MCF 10A (cell line): ENCODE measurements at regions of chr17 and their contacts with region 1.

Region 1: GRCh38 chr17:63919311-63919723 is 678 bp upstream of the GH1 start:
- DNase-seq: peak; percentile 64
- H3K4me3 Mint-ChIP-seq: no peak overlapping the region
- H3K27ac Mint-ChIP-seq: no peak overlapping the region
- H3K4me1 Mint-ChIP-seq: peaks cover 5% of the 10 kb centered on the region
- H3K27me3 Mint-ChIP-seq: peaks cover 13% of the 10 kb centered on the region
- CTCF ChIP-seq: peak; percentile 90

Region 2: GRCh38 chr17:63827002-63827771 is 92.1 kb before region 1 on chr17 and contains the starts of genes FTSJ3 and PSMC5:
- CTCF ChIA-PET with region 1: no interaction called
- POLR2A ChIA-PET with region 1: no interaction called
- intact Hi-C with region 1: no loop called
- DNase-seq: peak; percentile 96
- H3K4me3 Mint-ChIP-seq: peak within 1 kb of the TSS; percentile 100
- H3K27ac Mint-ChIP-seq: peak within 1 kb of the TSS; percentile 100
- H3K4me1 Mint-ChIP-seq: peaks cover 27% of the 10 kb centered on the region
- H3K27me3 Mint-ChIP-seq: no peaks in the 10 kb centered on the region
- CTCF ChIP-seq: peak; percentile 26
- total RNA-seq, gene FTSJ3: 36.7 and 49.5 TPM in 2 replicates
- total RNA-seq, gene PSMC5: 148 and 151 TPM in 2 replicates

Region 3: GRCh38 chr17:63931099-63931561 is 11.8 kb after region 1 on chr17:
- CTCF ChIA-PET with region 1: interaction called, 21 read pairs
- POLR2A ChIA-PET with region 1: no interaction called
- intact Hi-C with region 1: no loop called
- DNase-seq: no peak
- H3K4me3 Mint-ChIP-seq: no peak overlapping the region
- H3K27ac Mint-ChIP-seq: no peak overlapping the region
- H3K4me1 Mint-ChIP-seq: no peaks in the 10 kb centered on the region
- H3K27me3 Mint-ChIP-seq: peaks cover 7% of the 10 kb centered on the region
- CTCF ChIP-seq: no peak

Region 4: GRCh38 chr17:63946440-63947367 is 27.4 kb after region 1 on chr17:
- CTCF ChIA-PET with region 1: interaction called, 20 read pairs
- POLR2A ChIA-PET with region 1: no interaction called
- intact Hi-C with region 1: loop called (anchors 5 kb)
- DNase-seq: peak; percentile 35
- H3K4me3 Mint-ChIP-seq: no peak overlapping the region
- H3K27ac Mint-ChIP-seq: no peak overlapping the region
- H3K4me1 Mint-ChIP-seq: no peaks in the 10 kb centered on the region
- H3K27me3 Mint-ChIP-seq: no peaks in the 10 kb centered on the region
- CTCF ChIP-seq: peak; percentile 82

Region 5: DNA sequence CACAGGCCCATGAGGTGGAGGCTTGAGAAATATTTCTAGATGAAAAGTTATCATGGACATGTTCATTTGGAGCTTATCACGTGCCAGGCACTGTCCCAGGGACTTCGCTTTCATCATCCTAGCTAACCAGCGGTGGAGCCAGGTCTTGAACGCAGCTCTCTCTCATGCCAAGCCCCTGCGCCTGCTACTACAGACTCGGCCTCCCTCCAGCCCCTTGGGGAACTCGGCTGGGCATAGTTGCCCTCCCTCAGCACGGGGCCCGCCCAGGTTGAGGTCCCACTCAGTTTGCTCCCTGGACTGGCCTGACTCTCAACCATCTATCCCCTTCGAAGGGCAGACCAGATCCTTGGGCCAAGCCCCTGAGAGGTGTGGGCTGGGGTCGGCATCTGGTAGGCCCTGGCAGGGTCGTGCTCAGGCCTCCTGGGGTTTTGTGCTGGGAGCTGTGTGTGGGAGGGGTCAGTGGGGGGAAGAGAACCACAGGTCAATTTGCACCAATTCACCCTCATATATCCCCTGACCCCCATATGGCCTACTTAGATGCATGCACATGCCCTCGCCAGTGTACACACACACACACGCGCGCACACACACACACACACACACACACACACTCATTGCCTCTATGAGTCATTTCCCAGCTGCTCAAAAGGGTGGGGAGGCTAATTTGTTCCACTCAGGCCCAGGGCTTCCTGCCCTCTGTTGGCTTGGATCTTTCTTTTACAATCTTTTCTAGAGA is 65.5 kb after region 1 on chr17:
- CTCF ChIA-PET with region 1: interaction called, 6 read pairs
- POLR2A ChIA-PET with region 1: no interaction called
- intact Hi-C with region 1: loop called (anchors 2 kb)
- DNase-seq: peak; percentile 73
- H3K4me3 Mint-ChIP-seq: no peak overlapping the region
- H3K27ac Mint-ChIP-seq: peak overlapping the region; percentile 33
- H3K4me1 Mint-ChIP-seq: peaks cover 9% of the 10 kb centered on the region
- H3K27me3 Mint-ChIP-seq: peaks cover 7% of the 10 kb centered on the region
- CTCF ChIP-seq: no peak

Region 6: DNA sequence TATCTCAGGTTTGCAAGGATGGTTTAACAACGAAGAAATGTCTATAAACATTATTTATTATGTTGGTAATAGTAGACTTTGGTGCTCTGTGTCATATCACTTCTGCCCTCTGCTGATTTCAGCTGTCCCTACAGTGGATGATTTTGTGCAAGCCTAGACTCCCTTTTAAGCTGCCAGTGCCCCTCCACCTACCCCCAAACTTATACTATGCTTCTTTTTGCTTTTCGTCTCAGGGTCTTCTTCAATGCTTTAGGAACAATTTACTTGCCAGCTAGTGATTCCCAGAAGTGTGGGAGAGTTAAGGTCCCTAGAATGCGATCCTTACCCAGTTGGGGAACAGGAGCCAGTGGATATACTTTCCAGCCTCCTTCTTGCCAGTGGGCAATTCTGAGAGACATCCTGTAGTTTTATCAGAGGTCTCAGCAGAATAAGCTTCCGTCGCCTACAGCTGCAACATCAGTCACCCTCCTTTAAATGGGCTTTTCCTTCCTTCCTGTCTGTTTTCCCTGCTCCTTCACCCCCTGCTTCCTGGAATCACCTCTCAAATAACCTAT is 97.0 kb after region 1 on chr17:
- CTCF ChIA-PET with region 1: interaction called, 15 read pairs
- POLR2A ChIA-PET with region 1: no interaction called
- intact Hi-C with region 1: loop called (anchors 2 kb)
- DNase-seq: no peak
- H3K4me3 Mint-ChIP-seq: no peak overlapping the region
- H3K27ac Mint-ChIP-seq: no peak overlapping the region
- H3K4me1 Mint-ChIP-seq: no peaks in the 10 kb centered on the region
- H3K27me3 Mint-ChIP-seq: peaks cover 12% of the 10 kb centered on the region
- CTCF ChIP-seq: no peak

Region 7: GRCh38 chr17:64281962-64282727 is 362.8 kb after region 1 on chr17:
- CTCF ChIA-PET with region 1: interaction called, 4 read pairs
- POLR2A ChIA-PET with region 1: no interaction called
- intact Hi-C with region 1: loop called (anchors 10 kb)
- DNase-seq: peak; percentile 72
- H3K4me3 Mint-ChIP-seq: no peak overlapping the region
- H3K27ac Mint-ChIP-seq: no peak overlapping the region
- H3K4me1 Mint-ChIP-seq: peaks cover 9% of the 10 kb centered on the region
- H3K27me3 Mint-ChIP-seq: no peaks in the 10 kb centered on the region
- CTCF ChIP-seq: peak; percentile 74